CD8-positive, alpha-beta memory T cell (primary cell): ENCODE measurements at regions of chr16 and their contacts with region 1.

Region 1: DNA sequence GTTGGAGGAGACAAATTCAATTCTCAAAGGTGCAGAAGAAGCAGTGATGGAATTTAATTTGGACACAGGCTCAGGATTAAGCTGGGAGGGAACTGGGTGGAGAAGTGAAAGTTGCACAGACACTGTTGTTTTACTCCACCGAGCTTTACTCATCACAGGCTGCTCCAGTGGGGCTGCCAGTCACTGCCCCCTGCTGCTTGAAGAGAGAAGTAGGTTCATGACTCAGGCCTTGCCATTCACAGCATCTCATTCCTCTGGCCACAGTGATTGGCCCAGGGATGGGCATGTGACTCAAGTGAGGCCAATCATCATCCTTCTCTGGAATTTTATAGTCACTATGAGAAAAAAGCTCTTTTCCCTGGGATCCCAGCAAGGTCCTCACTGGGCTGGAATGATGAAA is 11.8 kb downstream of the GNAO1 start:
- DNase-seq: peak in 3 of 5 donors; percentile 20 to 71 (median 62)
- H3K4me3 ChIP-seq: no peak overlapping the region
- H3K4me3 Mint-ChIP-seq: no peak overlapping the region
- H3K27ac ChIP-seq: no peak overlapping the region
- H3K27ac Mint-ChIP-seq: no peak overlapping the region
- H3K4me1 ChIP-seq: peaks cover 52% of the 10 kb centered on the region
- H3K4me1 Mint-ChIP-seq: peaks cover 0 to 5% (median 0%) of the 10 kb centered on the region in 3 donors
- H3K27me3 ChIP-seq: no peaks in the 10 kb centered on the region
- H3K27me3 Mint-ChIP-seq: no peaks in the 10 kb centered on the region

Region 2: DNA sequence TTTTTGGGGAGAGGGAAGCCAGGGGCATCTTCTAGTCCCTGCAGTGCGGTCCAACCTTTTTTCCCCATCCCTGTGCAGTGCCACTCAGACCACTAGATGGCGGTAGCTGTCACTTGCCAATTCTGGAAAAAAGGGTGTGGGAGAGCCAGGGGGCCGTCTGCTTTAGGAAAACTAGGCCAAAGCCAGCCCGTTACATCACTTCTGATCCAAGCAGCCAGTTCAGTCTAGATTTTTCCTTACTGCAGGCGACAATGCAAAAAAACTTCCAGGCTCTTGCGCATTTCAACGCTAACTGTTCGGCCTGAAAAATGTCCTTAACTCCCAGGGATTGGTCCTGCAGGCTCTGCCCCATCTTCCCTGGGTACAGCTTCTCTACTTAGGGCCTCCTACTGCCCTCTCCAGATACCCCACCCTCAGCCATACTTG is 258.7 kb before region 1 on chr16:
- CTCF ChIA-PET with region 1: interaction called, 28 read pairs
- POLR2A ChIA-PET with region 1: no interaction called
- DNase-seq: peak; percentile 2 to 59 (median 21)
- H3K4me3 ChIP-seq: no peak overlapping the region
- H3K4me3 Mint-ChIP-seq: no peak overlapping the region
- H3K27ac ChIP-seq: no peak overlapping the region
- H3K27ac Mint-ChIP-seq: no peak overlapping the region
- H3K4me1 ChIP-seq: no peaks in the 10 kb centered on the region
- H3K4me1 Mint-ChIP-seq: no peaks in the 10 kb centered on the region
- H3K27me3 ChIP-seq: peaks cover 2% of the 10 kb centered on the region
- H3K27me3 Mint-ChIP-seq: peaks cover 28 to 70% of the 10 kb centered on the region in 2 donors

Region 3: DNA sequence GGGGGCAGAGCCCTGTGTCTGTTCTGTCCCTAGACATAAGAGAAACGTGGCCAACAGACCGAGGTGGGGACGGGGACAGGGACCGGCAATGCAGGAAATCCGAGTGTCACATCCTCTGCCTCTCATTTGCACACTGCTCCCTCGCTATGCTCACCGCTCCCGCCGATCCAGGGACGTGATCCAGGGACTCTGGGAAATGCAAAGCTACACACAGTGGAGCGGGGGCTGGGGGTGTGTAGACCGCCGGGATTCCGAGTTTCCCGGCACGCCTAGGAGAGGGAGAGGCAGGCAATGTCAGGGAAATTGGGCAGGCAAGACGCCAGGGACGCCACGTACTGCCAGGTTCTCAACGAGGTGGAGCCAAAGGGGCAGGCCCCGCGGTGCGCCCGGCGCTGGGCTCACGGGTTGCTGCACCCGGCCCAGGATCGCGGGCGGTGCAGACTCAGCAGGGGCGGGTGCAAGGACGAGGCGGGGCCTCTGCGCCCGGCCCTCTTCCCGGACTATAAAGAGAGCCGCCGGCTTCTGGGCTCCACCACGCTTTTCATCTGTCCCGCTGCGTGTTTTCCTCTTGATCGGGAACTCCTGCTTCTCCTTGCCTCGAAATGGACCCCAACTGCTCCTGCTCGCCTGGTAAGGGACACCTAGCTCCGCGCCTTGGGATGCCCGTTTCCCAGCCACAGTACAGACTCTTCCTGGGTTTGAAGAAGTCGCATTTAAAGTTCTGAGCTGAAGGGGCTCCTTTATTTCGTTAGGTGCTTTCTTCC is 479.1 kb after region 1 on chr16 and contains the start of gene MT1X:
- CTCF ChIA-PET with region 1: no interaction called
- POLR2A ChIA-PET with region 1: no interaction called
- DNase-seq: peak; percentile 72 to 93 (median 86)
- H3K4me3 ChIP-seq: peak within 1 kb of the TSS; percentile 86
- H3K4me3 Mint-ChIP-seq: peak within 1 kb of the TSS; percentile 94 to 98 (median 97)
- H3K27ac ChIP-seq: peak within 1 kb of the TSS; percentile 70
- H3K27ac Mint-ChIP-seq: peak within 1 kb of the TSS; percentile 90 to 98 (median 97)
- H3K4me1 ChIP-seq: peaks cover 17% of the 10 kb centered on the region
- H3K4me1 Mint-ChIP-seq: peaks cover 26 to 29% (median 27%) of the 10 kb centered on the region in 3 donors
- H3K27me3 ChIP-seq: no peaks in the 10 kb centered on the region
- H3K27me3 Mint-ChIP-seq: no peaks in the 10 kb centered on the region
- total RNA-seq, gene MT1X: 85.4 to 93.8 TPM